ENCODE measurements at regions of chr18 and their contacts with region 1.

Region 1: GRCh38 chr18:31722369-31722957 is 38.1 kb upstream of the B4GALT6 start:
- DNase-seq: peak; percentile 76
- H3K4me3 ChIP-seq: peak overlapping the region in 1 of 2 experiments; percentile 27; a peak in 1 of 4 replicates
- H3K27ac ChIP-seq: no peak overlapping the region
- H3K4me1 ChIP-seq: peaks cover 0 to 4% of the 10 kb centered on the region in 2 experiments; a peak in 1 of 4 replicates
- H3K27me3 ChIP-seq: no peaks in the 10 kb centered on the region; the same call in 1 of the 2 replicates
- CTCF ChIP-seq: peak; percentile 86
- EP300 ChIP-seq: no peak
- RAD21 ChIP-seq: peak; percentile 85

Region 2: DNA sequence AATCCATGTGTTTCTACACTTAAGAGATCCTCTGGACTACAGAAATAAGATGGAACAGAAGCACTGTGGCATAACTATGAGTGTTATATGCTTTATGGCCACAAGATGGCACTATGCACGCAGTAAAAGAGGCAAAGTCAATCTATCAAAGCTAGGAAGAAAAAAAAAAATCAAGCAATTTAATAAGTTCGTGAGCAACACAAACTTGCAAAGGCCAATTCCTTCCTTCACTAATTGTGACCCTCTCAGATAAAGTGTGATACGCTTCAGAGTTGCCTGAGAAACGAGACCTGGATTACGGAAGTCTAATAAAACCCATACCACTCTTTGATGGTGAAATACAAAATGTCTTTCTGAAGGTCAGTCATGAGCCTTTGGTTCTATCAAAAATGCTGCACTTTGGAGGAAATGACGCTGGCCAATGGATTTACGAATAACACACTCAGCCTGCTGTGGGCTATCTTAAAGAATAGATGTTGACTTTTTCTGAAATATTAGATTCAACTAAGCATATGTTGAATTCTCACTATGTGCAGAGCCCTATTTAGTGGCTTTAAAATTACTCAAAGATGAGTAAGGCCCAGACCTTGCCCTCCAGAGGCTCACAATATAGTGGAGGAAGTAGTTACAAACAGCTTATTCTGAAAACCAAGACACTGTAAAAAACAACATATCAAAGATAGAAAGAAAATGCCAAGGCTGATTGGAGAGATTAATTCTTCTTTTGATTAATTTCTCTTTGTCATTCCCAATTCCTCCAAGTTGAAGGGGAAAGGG is 166.3 kb before region 1 on chr18:
- CTCF ChIA-PET with region 1: interaction called, 92 read pairs
- POLR2A ChIA-PET with region 1: no interaction called
- DNase-seq: peak; percentile 44
- H3K4me3 ChIP-seq: peak overlapping the region in 1 of 2 experiments; percentile 22; a peak in 1 of 4 replicates
- H3K27ac ChIP-seq: no peak overlapping the region
- H3K4me1 ChIP-seq: no peaks in the 10 kb centered on the region
- H3K27me3 ChIP-seq: peaks cover 19% of the 10 kb centered on the region; the same call in 1 of the 2 replicates
- CTCF ChIP-seq: peak; percentile 89
- EP300 ChIP-seq: no peak
- RAD21 ChIP-seq: peak; percentile 96

Region 3: GRCh38 chr18:31587529-31587928 is 134.9 kb before region 1 on chr18:
- CTCF ChIA-PET with region 1: interaction called, 10 read pairs
- POLR2A ChIA-PET with region 1: no interaction called
- DNase-seq: no peak
- H3K4me3 ChIP-seq: no peak overlapping the region
- H3K27ac ChIP-seq: no peak overlapping the region
- H3K4me1 ChIP-seq: no peaks in the 10 kb centered on the region; a peak in 1 of 4 replicates
- H3K27me3 ChIP-seq: no peaks in the 10 kb centered on the region
- CTCF ChIP-seq: no peak
- EP300 ChIP-seq: no peak
- RAD21 ChIP-seq: no peak

Region 4: GRCh38 chr18:31694297-31694696 is 28.2 kb before region 1 on chr18:
- CTCF ChIA-PET with region 1: interaction called, 15 read pairs
- POLR2A ChIA-PET with region 1: no interaction called
- DNase-seq: no peak
- H3K4me3 ChIP-seq: no peak overlapping the region
- H3K27ac ChIP-seq: no peak overlapping the region
- H3K4me1 ChIP-seq: no peaks in the 10 kb centered on the region; a peak in 2 of 4 replicates
- H3K27me3 ChIP-seq: no peaks in the 10 kb centered on the region; the same call in 1 of the 2 replicates
- CTCF ChIP-seq: no peak
- EP300 ChIP-seq: no peak
- RAD21 ChIP-seq: no peak

Region 5: GRCh38 chr18:31741097-31741735 is 18.8 kb after region 1 on chr18:
- CTCF ChIA-PET with region 1: interaction called, 20 read pairs
- POLR2A ChIA-PET with region 1: no interaction called
- DNase-seq: peak; percentile 32
- H3K4me3 ChIP-seq: peak overlapping the region in 1 of 2 experiments; percentile 36; a peak in 1 of 4 replicates
- H3K27ac ChIP-seq: no peak overlapping the region
- H3K4me1 ChIP-seq: no peaks in the 10 kb centered on the region
- H3K27me3 ChIP-seq: peaks cover 13% of the 10 kb centered on the region; the same call in 1 of the 2 replicates
- CTCF ChIP-seq: peak; percentile 93
- EP300 ChIP-seq: no peak
- RAD21 ChIP-seq: peak; percentile 69